ENCODE measurements at regions of chr2 and their contacts with region 1.

Region 1: DNA sequence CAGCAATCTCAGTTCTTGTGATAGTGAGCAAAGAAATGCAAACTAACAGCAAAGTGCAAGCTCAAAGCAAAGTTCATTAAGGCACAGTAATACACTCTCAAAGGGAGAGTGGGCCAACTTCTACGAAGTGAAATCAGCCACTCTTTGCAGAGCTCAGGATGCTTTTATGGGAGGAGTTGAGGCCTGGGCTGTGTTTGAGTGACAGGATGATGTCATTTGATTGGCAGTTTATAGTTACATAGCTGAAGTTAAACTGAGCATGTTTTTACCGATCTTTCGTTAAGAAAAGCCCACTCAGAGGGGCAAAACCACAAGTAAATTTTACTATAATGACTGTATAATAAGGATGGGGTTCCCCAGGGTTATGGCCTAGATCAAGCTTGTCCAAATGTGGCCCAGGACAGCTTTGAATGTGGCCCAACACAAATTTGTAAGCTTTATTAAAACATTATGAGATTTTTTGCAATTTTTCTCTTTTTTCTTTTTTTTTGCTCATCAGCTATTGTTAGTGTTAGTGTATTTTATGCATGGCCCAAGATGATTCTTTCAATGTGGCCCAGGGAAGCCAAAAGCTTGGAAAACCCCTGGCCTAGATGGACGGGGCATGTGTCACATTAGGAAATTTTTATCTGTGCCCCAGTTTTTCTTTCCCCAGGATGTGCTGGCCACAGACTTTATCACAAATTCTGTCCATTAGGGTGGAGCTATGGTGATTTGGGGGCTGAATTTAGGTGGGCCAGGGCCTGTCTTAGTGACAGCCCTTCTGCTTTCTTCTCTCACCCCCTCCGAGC is 8.3 kb upstream of the DNAH7 start:
- DNase-seq: no peak
- CTCF ChIP-seq: no peak

Region 2: GRCh38 chr2:196041786-196042185 is 35.2 kb before region 1 on chr2:
- CTCF ChIA-PET with region 1: no interaction called
- POLR2A ChIA-PET with region 1: no interaction called
- DNase-seq: no peak
- CTCF ChIP-seq: no peak

Region 3: DNA sequence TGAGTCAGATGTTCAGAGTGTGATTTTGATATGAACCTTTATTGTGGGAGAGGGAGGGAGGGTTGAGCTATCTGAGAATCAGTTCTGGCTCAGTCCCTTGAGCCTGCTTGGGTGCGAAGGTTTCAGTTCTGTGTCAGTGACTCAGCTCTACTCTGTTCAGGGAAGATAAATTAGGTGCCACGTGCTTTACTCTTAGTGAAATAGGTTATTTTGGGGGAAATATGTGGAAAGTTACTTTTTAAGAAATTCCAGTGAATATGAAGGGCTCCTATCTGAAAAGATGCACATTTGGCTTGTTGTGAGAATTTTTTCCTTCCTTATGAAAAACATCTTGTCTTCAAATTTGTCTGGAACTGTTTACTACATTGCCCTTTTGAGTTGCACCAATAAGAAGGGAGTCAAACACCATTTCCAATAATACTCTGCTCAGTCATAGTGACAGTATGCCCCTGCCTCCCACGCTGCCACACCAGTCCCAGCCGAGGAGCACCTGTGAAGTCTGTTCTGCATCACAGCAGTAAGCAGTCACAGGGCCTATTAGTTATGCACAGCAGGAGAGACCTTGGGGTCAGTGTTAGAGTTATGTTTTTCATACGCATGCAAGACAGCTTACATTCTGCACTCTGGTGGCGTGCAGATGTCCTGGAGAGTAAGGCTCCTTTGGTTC is 24.5 kb after region 1 on chr2:
- CTCF ChIA-PET with region 1: interaction called, 46 read pairs
- POLR2A ChIA-PET with region 1: no interaction called
- DNase-seq: peak; percentile 69
- CTCF ChIP-seq: no peak

Region 4: DNA sequence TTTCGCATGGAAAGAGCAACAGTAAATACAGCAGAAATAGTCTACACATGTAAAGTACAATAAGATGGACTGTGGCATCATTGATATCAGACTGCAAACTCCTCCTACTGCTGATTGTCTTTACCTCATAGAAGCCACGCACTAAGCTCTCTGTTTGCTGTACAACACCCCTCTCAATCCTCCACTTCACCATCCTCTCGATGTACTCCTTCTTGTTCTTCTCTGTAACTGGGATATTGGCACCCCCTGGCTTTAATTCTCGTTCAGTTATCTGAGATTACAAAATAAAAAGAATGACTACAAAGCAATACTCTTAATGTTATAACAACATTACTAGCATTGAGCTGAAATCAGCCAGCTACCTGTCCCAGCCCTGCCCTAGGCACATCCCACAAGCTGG is 143.7 kb after region 1 on chr2:
- CTCF ChIA-PET with region 1: interaction called, 15 read pairs
- POLR2A ChIA-PET with region 1: no interaction called
- DNase-seq: no peak
- CTCF ChIP-seq: no peak

Region 5: GRCh38 chr2:196291873-196292800 is 215.2 kb after region 1 on chr2:
- CTCF ChIA-PET with region 1: interaction called, 22 read pairs
- POLR2A ChIA-PET with region 1: no interaction called
- DNase-seq: no peak
- CTCF ChIP-seq: no peak